Endothelial cell of umbilical vein (primary cell): ENCODE measurements at regions of chr9 and their contacts with region 1.

Region 1: DNA sequence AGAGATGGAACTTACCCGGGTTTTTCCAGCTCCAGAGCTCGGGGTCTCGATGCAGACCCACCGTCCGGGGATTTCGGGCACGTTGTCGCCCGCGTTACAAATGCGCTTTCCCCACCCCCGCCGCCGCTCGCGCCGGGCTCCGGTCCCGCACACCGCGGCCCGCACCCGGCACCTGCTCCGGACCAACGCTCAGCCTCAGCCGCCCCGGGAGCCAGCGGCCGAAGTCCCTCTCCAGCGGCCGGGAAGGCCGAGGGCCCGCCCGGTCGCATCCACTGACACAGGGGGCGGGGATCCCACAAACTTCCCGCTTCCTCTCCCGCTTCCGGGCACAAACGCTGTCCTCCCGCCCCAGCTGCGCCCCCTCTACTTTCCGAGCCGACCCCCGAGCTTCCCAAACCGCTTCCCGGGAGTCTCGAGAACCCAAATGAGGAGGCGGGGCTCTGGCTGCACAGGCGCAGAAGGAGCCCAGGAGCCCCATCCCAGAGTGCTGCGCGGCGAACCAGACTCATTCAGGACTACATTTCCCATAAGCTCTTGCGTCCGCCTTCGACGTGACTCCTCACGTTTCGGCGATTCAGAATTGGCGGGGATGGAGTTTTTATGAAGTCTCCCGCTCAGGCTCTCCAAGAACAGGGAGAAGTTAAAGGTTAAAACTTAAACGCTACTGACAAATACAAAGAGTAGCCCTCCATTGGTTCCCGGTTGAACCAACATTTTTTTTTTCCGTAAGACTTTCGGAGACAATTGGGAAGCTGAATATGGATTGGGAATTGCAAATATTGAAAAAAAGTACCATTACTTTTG is at the start of gene ZNF782:
- DNase-seq: peak; percentile 95
- H3K4me3 ChIP-seq: peak within 1 kb of the TSS; percentile 56 to 86 (median 86)
- H3K27ac ChIP-seq: peak within 1 kb of the TSS; percentile 6
- H3K4me1 ChIP-seq: peaks cover 11% of the 10 kb centered on the region
- H3K27me3 ChIP-seq: peaks cover 0 to 2% of the 10 kb centered on the region in 2 experiments
- CTCF ChIP-seq: no peak
- POLR2A ChIP-seq: no peak
- total RNA-seq, gene ZNF782: 3.6 and 4.4 TPM in 2 replicates

Region 2: DNA sequence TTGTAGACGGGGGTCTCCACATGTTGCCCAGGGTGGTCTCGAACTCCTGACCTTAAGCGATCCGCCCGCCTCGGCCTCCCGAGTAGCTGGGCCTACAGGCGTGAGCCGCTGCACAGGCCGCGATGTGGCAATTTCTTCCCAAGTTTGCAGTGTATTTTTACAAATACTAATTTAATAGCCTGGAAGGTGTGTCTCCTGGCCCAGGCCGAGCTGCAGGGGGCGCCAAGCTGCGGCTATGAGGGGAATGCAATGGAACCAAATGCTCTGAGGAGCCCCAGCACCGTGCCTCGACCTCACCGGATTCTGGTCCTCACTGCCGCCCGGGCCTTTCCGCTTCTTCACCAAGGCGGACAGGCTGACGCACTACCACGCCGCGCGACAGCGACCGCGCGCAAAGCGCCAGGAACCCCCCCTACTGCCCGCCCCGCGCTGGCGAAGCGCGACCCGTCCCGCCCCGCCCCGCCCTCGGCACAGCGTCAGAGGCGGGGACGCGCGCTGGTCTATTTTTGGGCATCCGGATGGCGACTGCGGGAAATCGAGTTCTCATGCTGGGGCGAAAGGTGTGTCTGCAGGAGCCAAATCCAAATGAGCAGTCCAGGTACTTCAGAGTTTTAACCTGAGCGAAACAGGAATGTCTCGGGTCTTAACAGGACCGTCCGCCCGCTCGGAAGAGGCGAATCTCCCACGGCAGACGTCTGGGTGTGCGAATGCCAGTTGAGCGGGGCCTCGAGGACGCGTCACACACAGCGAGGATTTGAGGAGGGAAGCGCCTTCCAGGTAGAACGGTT is 167.5 kb before region 1 on chr9:
- CTCF ChIA-PET with region 1: interaction called, 4 read pairs
- POLR2A ChIA-PET with region 1: no interaction called
- dilution Hi-C with region 1: no loop called
- intact Hi-C with region 1: loop called (anchors 1 kb)
- DNase-seq: peak; percentile 65
- H3K4me3 ChIP-seq: peak overlapping the region in 1 of 3 experiments; percentile 26
- H3K27ac ChIP-seq: no peak overlapping the region
- H3K4me1 ChIP-seq: no peaks in the 10 kb centered on the region
- H3K27me3 ChIP-seq: peaks cover 2 to 3% of the 10 kb centered on the region in 2 experiments
- CTCF ChIP-seq: peak; percentile 59 to 76
- POLR2A ChIP-seq: no peak

Region 3: DNA sequence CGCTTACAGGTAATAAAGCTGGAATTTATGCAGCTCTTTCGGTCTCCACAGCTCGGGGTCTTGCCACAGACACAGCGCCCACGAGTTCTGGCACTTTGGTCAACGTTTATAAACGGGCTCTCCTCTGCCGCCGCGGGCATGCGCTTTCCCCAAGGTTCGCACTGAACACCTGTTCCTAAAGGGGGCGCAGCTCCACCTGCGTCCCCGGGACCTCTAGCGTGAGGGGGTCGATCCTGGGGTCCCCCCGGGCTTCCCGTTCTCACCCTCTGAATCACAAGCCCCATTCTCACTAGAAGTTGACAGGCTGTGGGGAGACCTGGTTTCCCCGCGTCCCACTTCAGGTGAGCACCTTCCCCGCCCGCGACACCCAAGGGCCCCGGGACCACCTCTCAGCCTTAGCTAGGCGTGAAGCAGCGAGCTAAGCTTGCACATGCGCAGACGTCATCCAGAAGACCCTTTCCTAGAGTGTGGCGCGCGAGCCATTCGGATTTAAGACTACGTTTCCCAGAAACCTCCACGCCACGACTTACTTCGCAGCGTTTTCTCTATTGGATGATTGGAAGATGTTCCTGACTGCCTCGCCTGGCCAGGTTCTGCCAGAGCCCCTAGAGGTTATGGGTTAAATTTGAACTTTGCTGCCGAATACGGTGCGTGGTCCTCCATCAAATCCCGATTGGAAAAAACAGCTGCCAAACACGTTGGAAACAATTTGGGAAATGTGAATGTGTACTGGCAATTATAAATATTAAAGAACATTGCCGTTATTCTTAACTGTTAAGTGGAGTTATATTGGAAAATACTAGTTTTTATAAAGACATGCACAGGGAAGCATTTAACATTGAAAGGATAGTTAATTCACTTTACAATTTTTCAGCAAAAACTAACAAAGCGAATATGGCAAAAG is 21.4 kb after region 1 on chr9:
- CTCF ChIA-PET with region 1: interaction called, 28 read pairs
- POLR2A ChIA-PET with region 1: interaction called, 3 read pairs
- dilution Hi-C with region 1: no loop called
- intact Hi-C with region 1: no loop called
- DNase-seq: peak; percentile 87
- H3K4me3 ChIP-seq: peak overlapping the region; percentile 54 to 73 (median 60)
- H3K27ac ChIP-seq: peak overlapping the region; percentile 83
- H3K4me1 ChIP-seq: peaks cover 15% of the 10 kb centered on the region
- H3K27me3 ChIP-seq: peaks cover 0 to 11% of the 10 kb centered on the region in 2 experiments
- CTCF ChIP-seq: peak in 1 of 2 donors; percentile 27
- POLR2A ChIP-seq: no peak

Region 4: GRCh38 chr9:97220894-97221477 is 366.7 kb after region 1 on chr9:
- CTCF ChIA-PET with region 1: interaction called, 15 read pairs
- POLR2A ChIA-PET with region 1: no interaction called
- dilution Hi-C with region 1: no loop called
- intact Hi-C with region 1: loop called (anchors 5 kb)
- DNase-seq: no peak
- H3K4me3 ChIP-seq: no peak overlapping the region
- H3K27ac ChIP-seq: no peak overlapping the region
- H3K4me1 ChIP-seq: no peaks in the 10 kb centered on the region
- H3K27me3 ChIP-seq: peaks cover 20 to 37% of the 10 kb centered on the region in 2 experiments
- CTCF ChIP-seq: no peak
- POLR2A ChIP-seq: no peak

Region 5: GRCh38 chr9:97386733-97387503 is 532.6 kb after region 1 on chr9:
- CTCF ChIA-PET with region 1: interaction called, 40 read pairs
- POLR2A ChIA-PET with region 1: no interaction called
- dilution Hi-C with region 1: no loop called
- intact Hi-C with region 1: no loop called
- DNase-seq: peak; percentile 63
- H3K4me3 ChIP-seq: no peak overlapping the region
- H3K27ac ChIP-seq: no peak overlapping the region
- H3K4me1 ChIP-seq: no peaks in the 10 kb centered on the region
- H3K27me3 ChIP-seq: no peaks in the 10 kb centered on the region
- CTCF ChIP-seq: peak; percentile 97 to 98
- POLR2A ChIP-seq: no peak